ENCODE measurements at regions of chr7 and their contacts with region 1.

Region 1: DNA sequence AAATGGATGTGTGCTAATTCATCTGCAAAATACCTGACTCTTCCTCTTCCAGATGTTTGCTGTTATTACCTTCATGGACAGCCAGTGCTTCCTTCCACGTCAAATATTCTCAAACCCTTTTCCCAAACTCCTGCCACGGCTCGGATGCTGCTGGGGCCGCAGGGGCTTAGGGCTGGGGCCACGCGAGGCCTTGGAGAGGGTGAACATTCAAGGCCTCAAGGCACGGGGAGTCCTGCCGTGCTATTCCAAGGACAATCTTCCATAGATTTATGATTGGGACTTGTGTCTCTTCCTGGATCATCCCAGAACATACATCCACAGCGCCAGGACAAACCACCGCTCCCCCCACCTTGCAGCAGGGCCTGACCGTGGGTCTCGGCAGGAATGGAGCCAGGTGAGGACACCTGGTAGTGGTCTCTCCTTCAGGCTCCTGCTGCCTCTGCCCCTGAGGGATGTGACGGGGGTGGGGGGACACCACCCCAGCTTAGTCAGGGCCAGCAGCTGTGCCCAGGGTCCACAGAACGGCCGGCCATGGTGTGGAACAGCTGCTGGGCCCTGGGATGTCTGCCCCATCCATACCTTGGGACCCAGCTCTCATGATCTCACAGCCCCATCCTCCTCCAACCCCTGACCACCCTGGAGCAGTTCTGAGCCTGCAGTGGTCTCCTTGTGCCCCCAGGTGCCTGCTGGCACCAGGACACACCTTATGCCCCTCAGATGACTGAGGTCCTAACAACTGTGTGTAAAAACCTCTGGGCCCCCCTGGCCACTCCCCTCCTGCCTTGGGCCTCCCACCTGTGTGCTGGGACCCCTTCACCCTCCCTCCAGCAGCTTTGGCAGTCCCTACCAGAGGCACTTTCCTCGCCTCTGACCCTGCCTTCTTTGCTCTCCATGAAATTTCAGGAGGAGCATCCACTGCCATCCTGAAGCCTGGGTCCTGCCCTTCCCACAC is 16.7 kb downstream of the VIPR2 start:
- DNase-seq: peak; percentile 35
- ATAC-seq: no peak

Region 2: GRCh38 chr7:159158888-159159405 is 31.0 kb after region 1 on chr7:
- intact Hi-C with region 1: loop called (anchors 2 kb)
- DNase-seq: no peak
- ATAC-seq: no peak